OCI-LY7 (cell line): ENCODE measurements at regions of chr1 and their contacts with region 1.

Region 1: GRCh38 chr1:181088079-181089016 is at the start of gene IER5:
- DNase-seq: peak; percentile 96
- H3K4me3 ChIP-seq: peak within 1 kb of the TSS; percentile 81
- H3K27ac ChIP-seq: peak within 1 kb of the TSS; percentile 75
- H3K4me1 ChIP-seq: peaks cover 27% of the 10 kb centered on the region
- CTCF ChIP-seq: no peak
- total RNA-seq, gene IER5: 14.3 and 18.3 TPM in 2 replicates

Region 2: DNA sequence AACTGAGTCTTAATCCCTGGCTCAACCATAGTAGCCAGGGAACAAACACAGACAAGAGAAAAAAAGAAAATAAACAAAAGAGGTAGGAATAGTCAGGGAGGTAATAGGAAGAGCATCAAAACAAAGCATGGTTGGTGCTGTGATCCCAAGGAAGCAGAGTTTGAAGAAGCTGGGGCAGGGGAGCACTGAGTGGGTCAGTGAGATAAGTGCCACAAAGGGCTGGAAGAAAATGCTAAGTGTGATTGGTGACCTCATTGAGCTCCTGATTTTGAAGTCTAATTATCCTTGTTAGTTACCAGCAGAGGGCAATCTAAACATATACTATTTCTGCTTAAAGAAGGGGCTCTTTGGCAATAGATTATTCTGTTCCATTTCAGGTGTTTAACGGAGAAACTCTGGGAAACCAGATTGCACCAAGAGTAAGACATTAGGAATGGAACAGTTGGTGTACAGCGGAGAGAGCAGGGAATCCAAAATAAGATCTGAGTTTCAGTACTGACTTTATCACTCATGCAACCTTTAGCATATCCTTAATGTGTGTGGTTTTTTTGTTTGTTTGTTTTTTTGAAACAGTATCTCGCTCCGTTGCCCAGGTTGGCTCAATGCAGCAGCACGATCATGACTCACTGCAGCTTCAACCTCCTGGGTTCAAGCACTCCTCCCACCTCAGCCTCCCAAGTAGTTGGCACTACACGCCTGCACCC is 206.4 kb before region 1 on chr1:
- CTCF ChIA-PET with region 1: no interaction called
- POLR2A ChIA-PET with region 1: no interaction called
- intact Hi-C with region 1: loop called (anchors 5 kb)
- DNase-seq: peak; percentile 60
- H3K4me3 ChIP-seq: no peak overlapping the region
- H3K27ac ChIP-seq: no peak overlapping the region
- H3K4me1 ChIP-seq: no peaks in the 10 kb centered on the region
- CTCF ChIP-seq: peak; percentile 78

Region 3: GRCh38 chr1:181033799-181034451 is 54.4 kb before region 1 on chr1 and contains the start of gene MR1:
- CTCF ChIA-PET with region 1: no interaction called
- POLR2A ChIA-PET with region 1: interaction called, 13 read pairs
- intact Hi-C with region 1: loop called (anchors 5 kb)
- DNase-seq: peak; percentile 93
- H3K4me3 ChIP-seq: peak within 1 kb of the TSS; percentile 81
- H3K27ac ChIP-seq: peak within 1 kb of the TSS; percentile 53
- H3K4me1 ChIP-seq: peaks cover 19% of the 10 kb centered on the region
- CTCF ChIP-seq: no peak
- total RNA-seq, gene MR1: 5.9 and 7.9 TPM in 2 replicates

Region 4: DNA sequence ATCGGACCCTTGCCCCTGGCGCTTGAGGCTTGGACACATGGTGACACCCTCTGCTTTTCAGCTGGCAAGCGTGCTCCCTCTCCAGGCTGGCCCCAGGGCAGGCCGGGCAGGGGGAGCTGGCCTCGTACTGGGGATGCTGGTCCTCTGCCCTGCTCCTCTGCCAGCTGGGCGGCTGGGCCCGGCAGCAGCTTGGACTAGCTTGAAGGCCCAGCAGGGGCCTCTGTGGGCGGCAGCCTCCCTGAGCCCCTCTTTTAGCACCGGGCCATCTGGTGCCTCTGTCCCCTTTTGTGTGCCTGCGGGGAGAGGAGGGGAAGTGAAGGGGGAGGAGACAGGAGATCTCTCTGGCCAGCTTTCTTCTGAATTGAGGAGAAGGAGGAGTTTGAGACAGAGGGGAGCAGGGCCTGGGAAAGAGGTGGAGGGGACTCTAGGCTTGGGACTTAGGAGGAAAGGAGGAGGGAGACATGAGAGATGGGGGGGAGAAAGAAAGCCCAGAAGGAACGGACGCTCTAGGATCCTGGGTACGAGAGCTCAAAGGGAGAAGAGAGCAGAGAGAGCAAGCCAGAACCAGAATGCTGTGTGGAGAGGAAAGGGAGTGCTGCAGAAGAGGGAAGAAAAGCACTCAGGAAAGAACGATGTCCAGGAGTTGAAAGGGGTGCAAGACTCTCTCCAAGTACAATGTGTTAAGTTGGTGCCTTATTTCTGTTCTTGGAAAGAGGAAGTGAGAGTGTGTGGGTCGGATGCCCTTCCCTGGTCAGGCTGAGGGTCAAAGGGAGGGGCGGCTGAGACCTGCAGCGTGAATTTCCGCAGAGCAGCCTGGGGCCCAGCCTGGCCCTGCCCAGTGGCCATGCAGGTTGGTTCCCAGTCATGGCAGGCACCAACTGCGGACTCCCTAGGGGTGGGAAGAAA is 40.5 kb after region 1 on chr1:
- CTCF ChIA-PET with region 1: no interaction called
- POLR2A ChIA-PET with region 1: interaction called, 3 read pairs
- intact Hi-C with region 1: loop called (anchors 1 kb)
- DNase-seq: peak; percentile 63
- H3K4me3 ChIP-seq: no peak overlapping the region
- H3K27ac ChIP-seq: no peak overlapping the region
- H3K4me1 ChIP-seq: peaks cover 49% of the 10 kb centered on the region
- CTCF ChIP-seq: no peak

Region 5: DNA sequence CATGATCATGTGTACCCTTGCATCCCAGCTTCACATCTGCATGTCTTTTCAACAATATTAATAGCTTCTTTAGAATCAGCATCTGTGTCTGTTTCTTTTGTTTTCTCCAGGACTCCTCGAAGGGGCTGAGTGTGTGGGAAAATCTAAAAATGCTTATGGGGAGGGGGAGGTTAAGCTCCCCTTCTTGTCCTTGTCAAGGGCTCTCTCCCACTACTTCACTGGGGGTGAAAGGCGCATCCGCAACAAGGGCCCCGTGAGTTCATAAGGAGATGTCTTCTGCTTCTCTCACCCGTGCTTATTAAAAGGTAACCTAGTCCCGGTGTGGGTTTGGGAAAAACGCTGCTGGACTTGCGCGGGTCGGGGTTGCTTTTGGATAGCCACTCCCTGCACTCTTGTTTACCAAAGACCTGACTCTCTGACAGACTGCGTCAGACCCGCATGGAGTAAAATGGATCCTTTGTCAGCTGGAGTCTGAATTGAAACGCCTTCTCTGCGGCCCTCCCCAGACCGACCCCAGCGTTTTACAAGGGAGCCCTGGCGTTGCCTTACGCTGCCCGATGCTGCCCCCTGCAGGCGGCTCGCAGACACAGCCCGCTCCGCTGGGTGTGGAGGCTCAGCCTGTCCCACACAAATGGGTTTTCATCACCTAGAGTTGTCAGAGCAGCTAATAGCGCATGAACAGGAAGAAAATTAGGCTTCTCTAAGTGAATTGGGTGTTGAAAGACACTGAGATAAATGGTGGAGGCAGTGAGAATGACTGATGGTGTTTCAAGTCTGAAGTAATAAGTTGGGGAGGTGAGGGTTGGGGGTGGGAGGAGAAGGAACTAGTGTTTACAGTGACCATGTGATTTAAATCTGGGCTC is 54.0 kb after region 1 on chr1:
- CTCF ChIA-PET with region 1: interaction called, 9 read pairs
- POLR2A ChIA-PET with region 1: interaction called, 4 read pairs
- intact Hi-C with region 1: loop called (anchors 1 kb)
- DNase-seq: peak; percentile 76
- H3K4me3 ChIP-seq: no peak overlapping the region
- H3K27ac ChIP-seq: no peak overlapping the region
- H3K4me1 ChIP-seq: no peaks in the 10 kb centered on the region
- CTCF ChIP-seq: peak; percentile 98

Region 6: GRCh38 chr1:181263054-181263453 is 174.7 kb after region 1 on chr1:
- CTCF ChIA-PET with region 1: no interaction called
- POLR2A ChIA-PET with region 1: no interaction called
- intact Hi-C with region 1: no loop called
- DNase-seq: no peak
- H3K4me3 ChIP-seq: no peak overlapping the region
- H3K27ac ChIP-seq: no peak overlapping the region
- H3K4me1 ChIP-seq: no peaks in the 10 kb centered on the region
- CTCF ChIP-seq: no peak